ENCODE measurements at regions of chr18 and their contacts with region 1.

Region 1: GRCh38 chr18:57505231-57505630 is 70.1 kb downstream of the ONECUT2 start:
- DNase-seq: no peak

Region 2: DNA sequence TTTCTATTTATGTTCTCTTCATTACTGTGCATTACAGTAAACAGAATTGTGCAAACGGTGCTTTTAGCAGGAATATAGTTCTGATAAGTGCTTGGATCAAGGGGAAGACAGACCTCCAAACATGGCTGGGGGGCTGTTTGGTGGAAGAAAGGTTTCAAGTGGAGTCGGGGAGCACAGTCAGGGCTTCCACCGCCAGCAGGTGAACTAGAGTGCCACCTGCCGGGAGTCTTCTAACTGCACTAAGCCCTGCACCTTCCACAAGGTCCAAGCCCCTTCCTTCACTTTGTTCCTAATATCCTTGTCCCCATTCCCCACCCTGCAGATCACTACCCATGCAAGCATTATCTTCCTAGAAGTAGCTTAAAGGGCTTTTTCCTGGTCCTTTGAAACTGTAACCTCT is 58.9 kb before region 1 on chr18:
- intact Hi-C with region 1: loop called in 1 of 2 experiments (anchors 10 kb)
- DNase-seq: no peak

Region 3: GRCh38 chr18:57544936-57545660 is 39.9 kb after region 1 on chr18:
- intact Hi-C with region 1: no loop called
- DNase-seq: no peak

Region 4: DNA sequence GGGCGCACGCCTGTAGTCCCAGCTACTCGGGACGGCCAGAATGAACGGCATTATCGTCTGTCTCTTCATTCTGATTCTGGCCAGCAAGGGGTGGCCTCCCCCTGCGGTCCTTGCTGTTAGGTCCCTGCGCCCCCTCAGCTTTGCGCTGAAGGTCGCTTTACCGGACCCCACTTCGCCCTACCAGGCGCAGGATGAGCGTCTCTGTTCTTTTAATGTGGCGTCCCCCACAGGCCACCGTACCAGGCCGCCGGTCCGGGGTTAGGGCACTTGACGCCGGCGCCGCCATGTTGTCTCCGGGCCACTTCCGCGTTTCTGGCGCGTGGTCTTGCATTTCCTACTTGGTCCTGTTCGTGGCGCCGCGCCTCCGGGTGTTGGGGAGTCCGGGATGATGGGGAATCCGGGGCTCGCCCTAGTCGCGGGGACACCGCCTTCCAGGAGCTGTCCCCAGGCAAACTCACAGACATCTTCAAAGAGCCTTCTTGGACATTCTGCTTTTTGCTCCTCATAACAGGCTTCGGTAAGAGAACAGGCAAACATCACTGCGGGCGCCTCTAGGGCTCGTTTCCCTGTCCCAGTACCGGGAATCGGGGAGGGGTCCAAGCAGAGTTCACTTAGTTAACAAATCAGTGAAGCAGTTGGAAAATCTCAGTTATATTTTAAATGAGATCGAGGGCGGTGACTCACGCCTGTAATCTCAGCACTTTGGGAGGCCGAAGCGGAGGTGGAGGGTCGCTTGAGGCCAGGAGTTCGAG is 124.9 kb after region 1 on chr18:
- intact Hi-C with region 1: no loop called
- DNase-seq: peak; percentile 99

Region 5: GRCh38 chr18:58004317-58004716 is 499.1 kb after region 1 on chr18:
- intact Hi-C with region 1: no loop called
- DNase-seq: no peak

Measured in posterior vena cava (tissue), 2 donors.